Colonic mucosa (tissue), 4 donors: ENCODE measurements at regions of chr14 and their contacts with region 1.

Region 1: DNA sequence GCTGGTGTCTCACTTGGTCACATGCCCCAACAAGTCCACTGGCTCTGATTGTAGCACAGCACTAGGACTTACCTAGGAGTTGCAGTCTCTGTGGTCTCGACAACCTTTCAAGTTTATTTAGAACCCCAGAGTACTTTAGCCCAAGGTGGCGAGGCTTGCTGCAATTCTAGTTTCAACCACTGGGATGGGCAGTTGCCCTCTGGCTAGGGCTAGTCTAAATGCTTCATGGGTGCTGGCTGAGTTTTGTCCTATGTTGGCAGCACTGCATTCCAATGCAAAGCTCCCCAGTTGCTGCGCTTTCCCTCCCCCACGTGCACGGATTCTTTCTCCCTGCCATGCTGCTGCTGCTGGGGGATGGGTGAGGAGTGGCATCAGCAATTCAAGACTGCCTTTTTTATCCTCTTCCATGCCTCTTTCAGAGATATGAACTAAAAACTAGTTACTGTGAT is 207.9 kb downstream of the SYNE2 start:
- DNase-seq: peak; percentile 42
- H3K4me3 ChIP-seq: no peak overlapping the region
- H3K27ac ChIP-seq: no peak overlapping the region
- H3K4me1 ChIP-seq: no peaks in the 10 kb centered on the region
- H3K27me3 ChIP-seq: no peaks in the 10 kb centered on the region
- CTCF ChIP-seq: peak; percentile 65

Region 2: GRCh38 chr14:64137657-64138290 is 77.1 kb after region 1 on chr14:
- intact Hi-C with region 1: loop called (anchors 10 kb)
- DNase-seq: no peak
- H3K4me3 ChIP-seq: no peak overlapping the region
- H3K27ac ChIP-seq: no peak overlapping the region
- H3K4me1 ChIP-seq: no peaks in the 10 kb centered on the region
- H3K27me3 ChIP-seq: no peaks in the 10 kb centered on the region
- CTCF ChIP-seq: no peak